ENCODE measurements at regions of chr20 and their contacts with region 1.

Region 1: DNA sequence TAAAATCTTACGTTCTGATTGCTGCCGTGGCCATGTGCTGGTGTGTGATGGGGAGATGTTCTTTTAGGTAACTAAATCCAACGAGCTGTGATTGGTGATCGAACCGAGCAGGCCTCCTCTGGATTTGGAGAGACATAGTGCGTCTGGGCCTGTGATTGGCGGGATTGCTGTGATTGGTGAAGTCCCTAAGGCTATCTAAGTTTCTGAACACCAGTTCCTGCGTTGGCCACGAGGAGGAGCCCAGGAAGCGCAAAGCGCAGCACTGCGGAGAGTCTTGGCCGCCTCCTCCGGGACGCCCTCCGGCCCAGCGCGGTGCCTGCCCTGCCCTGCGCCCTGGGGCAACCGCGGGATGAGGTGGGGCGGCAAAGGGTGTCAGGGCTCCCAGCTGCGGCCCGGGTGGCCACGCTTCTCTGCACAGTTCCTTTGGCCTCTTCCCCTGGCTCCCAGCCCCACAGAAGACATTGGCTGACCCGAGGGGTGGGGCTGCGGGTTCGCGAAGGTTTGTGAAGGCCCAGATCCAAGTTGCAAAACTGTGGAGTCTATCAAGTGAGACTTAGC is 33.0 kb downstream of the HNF4A start:
- DNase-seq: peak; percentile 91
- ATAC-seq: peak; percentile 93
- H3K4me3 Mint-ChIP-seq: no peak overlapping the region
- H3K27ac Mint-ChIP-seq: no peak overlapping the region
- H3K4me1 Mint-ChIP-seq: peaks cover 9% of the 10 kb centered on the region
- H3K27me3 Mint-ChIP-seq: peaks cover 6% of the 10 kb centered on the region

Region 2: GRCh38 chr20:44217342-44218092 is 171.0 kb before region 1 on chr20:
- CTCF ChIA-PET with region 1: interaction called, 87 read pairs
- POLR2A ChIA-PET with region 1: no interaction called
- intact Hi-C with region 1: loop called (anchors 1 kb)
- DNase-seq: peak; percentile 82
- ATAC-seq: peak; percentile 46
- H3K4me3 Mint-ChIP-seq: peak overlapping the region; percentile 65
- H3K27ac Mint-ChIP-seq: peak overlapping the region; percentile 83
- H3K4me1 Mint-ChIP-seq: peaks cover 50% of the 10 kb centered on the region
- H3K27me3 Mint-ChIP-seq: no peaks in the 10 kb centered on the region

Region 3: DNA sequence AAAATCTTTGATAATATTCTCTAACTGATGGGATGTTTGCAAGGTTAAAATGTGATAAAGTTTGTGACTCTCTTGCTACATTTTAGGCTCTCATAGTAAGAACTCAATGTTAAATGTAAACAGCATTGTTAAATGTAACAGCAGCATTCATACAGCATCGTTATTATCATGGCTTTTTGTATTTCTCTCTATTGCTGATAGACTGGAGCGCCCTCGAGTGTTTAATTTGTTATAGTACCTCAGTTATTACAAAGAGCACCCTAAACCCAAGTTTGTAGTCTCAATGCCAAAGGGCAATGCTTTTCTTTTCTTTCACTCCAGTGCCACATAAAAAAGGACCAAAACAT is 72.2 kb after region 1 on chr20:
- CTCF ChIA-PET with region 1: interaction called, 5 read pairs
- POLR2A ChIA-PET with region 1: no interaction called
- intact Hi-C with region 1: loop called (anchors 1 to 2 kb)
- DNase-seq: no peak
- ATAC-seq: peak; percentile 47
- H3K4me3 Mint-ChIP-seq: no peak overlapping the region
- H3K27ac Mint-ChIP-seq: no peak overlapping the region
- H3K4me1 Mint-ChIP-seq: no peaks in the 10 kb centered on the region
- H3K27me3 Mint-ChIP-seq: no peaks in the 10 kb centered on the region

Region 4: GRCh38 chr20:44521484-44522481 is 133.2 kb after region 1 on chr20 and contains the start of gene SERINC3:
- CTCF ChIA-PET with region 1: no interaction called
- POLR2A ChIA-PET with region 1: no interaction called
- intact Hi-C with region 1: loop called in 1 of 2 experiments (anchors 1 kb)
- DNase-seq: peak; percentile 98
- ATAC-seq: peak; percentile 99
- H3K4me3 Mint-ChIP-seq: peak within 1 kb of the TSS; percentile 81
- H3K27ac Mint-ChIP-seq: peak within 1 kb of the TSS; percentile 93
- H3K4me1 Mint-ChIP-seq: peaks cover 55% of the 10 kb centered on the region
- H3K27me3 Mint-ChIP-seq: no peaks in the 10 kb centered on the region
- total RNA-seq, gene SERINC3: 51.9 to 58.5 TPM

Region 5: DNA sequence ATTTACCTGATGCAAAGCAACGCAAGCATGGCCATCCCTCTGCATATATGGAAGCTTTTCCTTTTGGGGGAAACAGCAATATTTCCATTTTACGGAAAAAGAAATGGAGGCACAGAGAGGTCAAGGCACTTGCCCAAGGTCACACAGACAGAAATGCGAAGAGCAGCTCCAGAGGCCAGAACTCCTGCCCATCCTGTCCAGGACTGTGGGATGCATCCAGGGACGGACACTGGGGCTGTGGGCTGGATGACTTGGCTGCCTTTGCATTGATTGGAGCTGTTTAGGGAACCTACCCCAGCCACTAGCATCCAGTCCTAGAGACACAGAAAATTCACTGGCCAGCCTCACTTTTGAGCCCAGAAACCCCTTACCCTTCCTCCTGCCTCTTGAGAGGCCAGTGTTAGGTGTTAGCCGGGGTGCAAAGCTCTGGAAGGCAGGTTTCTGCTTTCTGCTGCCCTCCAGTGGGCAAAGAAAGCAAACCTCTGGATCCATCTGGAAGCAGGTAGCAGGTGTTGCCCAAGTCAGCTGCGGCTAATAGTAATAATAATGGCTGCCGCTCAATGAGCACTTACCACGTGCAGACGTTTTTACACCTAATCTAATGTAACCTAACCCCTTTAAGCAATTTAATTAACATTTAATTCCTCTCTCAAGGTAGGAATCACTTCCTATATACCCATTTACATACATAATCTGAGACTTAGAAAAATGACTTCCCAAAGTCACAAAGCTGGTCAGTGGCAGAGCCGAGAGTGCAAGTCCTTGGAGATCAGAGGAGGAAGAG is 294.9 kb after region 1 on chr20:
- CTCF ChIA-PET with region 1: interaction called, 4 read pairs
- POLR2A ChIA-PET with region 1: no interaction called
- intact Hi-C with region 1: loop called in 1 of 2 experiments (anchors 2 kb)
- DNase-seq: peak; percentile 69
- ATAC-seq: peak; percentile 79
- H3K4me3 Mint-ChIP-seq: no peak overlapping the region
- H3K27ac Mint-ChIP-seq: no peak overlapping the region
- H3K4me1 Mint-ChIP-seq: no peaks in the 10 kb centered on the region
- H3K27me3 Mint-ChIP-seq: no peaks in the 10 kb centered on the region

Region 6: DNA sequence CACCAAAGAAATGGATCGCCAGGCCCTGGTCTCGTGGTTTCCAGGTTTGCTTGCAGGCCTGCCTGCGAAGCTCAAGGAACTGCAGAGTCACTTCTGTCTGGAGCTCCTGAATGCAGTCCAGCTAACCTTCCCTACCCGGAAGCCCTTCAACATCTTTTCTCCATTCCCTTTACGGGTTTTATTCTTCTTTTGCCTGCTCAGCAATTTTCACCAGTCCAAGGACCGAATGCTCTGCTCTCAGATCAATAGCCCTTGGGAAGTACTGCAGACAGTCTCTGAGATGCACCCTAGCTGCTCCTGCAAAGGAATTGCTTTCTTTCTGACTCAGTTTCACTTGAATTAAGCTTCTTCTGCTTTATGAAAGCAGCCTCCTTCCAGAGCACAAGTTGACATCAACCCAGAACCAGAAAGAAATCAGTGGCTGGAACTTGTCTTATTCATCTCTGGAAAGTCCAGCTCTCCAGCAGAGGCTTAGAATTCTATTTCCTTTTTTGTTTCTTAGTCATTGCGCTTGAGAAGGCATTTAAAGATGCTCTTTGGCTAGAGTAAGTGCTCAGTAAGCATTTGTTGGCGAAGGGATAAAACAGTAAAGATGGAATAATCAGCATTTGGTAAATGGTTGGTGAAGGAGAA is 478.3 kb after region 1 on chr20:
- CTCF ChIA-PET with region 1: no interaction called
- POLR2A ChIA-PET with region 1: no interaction called
- intact Hi-C with region 1: loop called in 1 of 2 experiments (anchors 5 kb)
- DNase-seq: no peak
- ATAC-seq: peak; percentile 23
- H3K4me3 Mint-ChIP-seq: peak overlapping the region; percentile 57
- H3K27ac Mint-ChIP-seq: no peak overlapping the region
- H3K4me1 Mint-ChIP-seq: peaks cover 13% of the 10 kb centered on the region
- H3K27me3 Mint-ChIP-seq: peaks cover 7% of the 10 kb centered on the region